Mammary epithelial cell (primary cell): ENCODE measurements at regions of chr7 and their contacts with region 1.

Region 1: DNA sequence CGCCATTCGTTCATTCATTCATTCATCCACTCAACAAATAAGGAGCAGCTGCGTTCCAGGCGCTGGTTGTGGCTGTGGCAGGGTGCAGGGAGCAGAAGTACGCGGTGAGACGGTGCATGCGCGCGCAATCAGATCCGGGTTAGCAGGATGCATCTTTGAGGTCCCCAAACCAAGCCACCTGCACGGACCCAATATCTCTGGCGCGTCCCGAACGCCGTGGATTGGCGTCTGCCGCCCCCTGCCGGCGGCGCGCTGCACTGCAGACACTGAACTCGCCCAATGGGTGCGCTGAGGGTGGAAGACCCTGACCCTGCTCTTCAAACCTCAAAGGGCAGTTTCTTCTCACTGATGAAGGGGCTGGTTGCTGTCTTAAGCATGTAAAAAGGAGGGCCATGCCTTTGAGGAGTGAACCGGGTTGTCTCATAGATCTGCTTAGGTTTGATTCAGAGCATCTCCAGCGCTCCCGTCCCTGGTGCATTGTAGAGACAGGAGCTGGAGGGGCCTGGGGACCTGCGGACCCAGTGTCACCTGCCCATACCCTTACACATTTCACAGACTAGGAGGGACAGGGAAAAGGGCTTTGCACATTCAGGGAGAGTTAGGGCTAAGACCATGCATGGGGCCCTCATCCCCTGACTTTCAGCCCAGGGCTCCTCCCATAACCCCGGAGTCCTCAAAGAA is 102.5 kb downstream of the RAMP3 start:
- DNase-seq: no peak
- H3K4me3 ChIP-seq: no peak overlapping the region
- H3K27ac ChIP-seq: no peak overlapping the region
- H3K4me1 ChIP-seq: no peaks in the 10 kb centered on the region
- H3K27me3 ChIP-seq: peaks cover 2% of the 10 kb centered on the region
- CTCF ChIP-seq: peak; percentile 96 to 99

Region 2: DNA sequence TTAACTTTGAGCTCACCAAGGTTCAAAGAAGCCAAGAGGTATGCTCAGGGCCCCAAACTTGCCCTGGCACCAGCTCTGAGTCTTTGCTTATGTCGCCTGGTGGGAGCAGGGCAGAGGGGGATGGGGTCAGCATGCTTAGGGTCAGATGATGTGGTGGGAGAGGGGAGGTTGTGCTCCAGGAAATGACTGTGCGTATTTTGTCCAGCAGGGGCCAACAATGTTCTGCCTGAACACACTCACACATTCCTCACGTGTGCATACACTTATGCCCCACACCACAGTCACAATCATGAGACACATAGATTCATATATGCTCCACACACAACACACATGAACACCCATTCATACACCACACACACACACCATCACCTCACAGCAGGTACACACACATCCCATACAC is 106.9 kb before region 1 on chr7:
- CTCF ChIA-PET with region 1: no interaction called
- dilution Hi-C with region 1: no loop called
- in situ Hi-C with region 1: loop called (anchors 5 to 10 kb)
- intact Hi-C with region 1: loop called (anchors 1 kb)
- DNase-seq: no peak
- H3K4me3 ChIP-seq: no peak overlapping the region
- H3K27ac ChIP-seq: no peak overlapping the region
- H3K4me1 ChIP-seq: no peaks in the 10 kb centered on the region
- H3K27me3 ChIP-seq: peaks cover 6% of the 10 kb centered on the region
- CTCF ChIP-seq: no peak

Region 3: GRCh38 chr7:45160417-45160881 is 99.7 kb before region 1 on chr7:
- CTCF ChIA-PET with region 1: no interaction called
- dilution Hi-C with region 1: no loop called
- in situ Hi-C with region 1: loop called in 1 of 2 experiments (anchors 10 kb)
- intact Hi-C with region 1: no loop called
- DNase-seq: no peak
- H3K4me3 ChIP-seq: no peak overlapping the region
- H3K27ac ChIP-seq: no peak overlapping the region
- H3K4me1 ChIP-seq: no peaks in the 10 kb centered on the region
- H3K27me3 ChIP-seq: peaks cover 9% of the 10 kb centered on the region
- CTCF ChIP-seq: no peak

Region 4: GRCh38 chr7:45178241-45179225 is 81.6 kb before region 1 on chr7:
- CTCF ChIA-PET with region 1: no interaction called
- dilution Hi-C with region 1: loop called (anchors 5 kb)
- in situ Hi-C with region 1: no loop called
- intact Hi-C with region 1: no loop called
- DNase-seq: no peak
- H3K4me3 ChIP-seq: no peak overlapping the region
- H3K27ac ChIP-seq: no peak overlapping the region
- H3K4me1 ChIP-seq: no peaks in the 10 kb centered on the region
- H3K27me3 ChIP-seq: no peaks in the 10 kb centered on the region
- CTCF ChIP-seq: no peak

Region 5: GRCh38 chr7:45211066-45211465 is 49.0 kb before region 1 on chr7:
- CTCF ChIA-PET with region 1: no interaction called
- dilution Hi-C with region 1: loop called (anchors 5 kb)
- in situ Hi-C with region 1: no loop called
- intact Hi-C with region 1: no loop called
- DNase-seq: no peak
- H3K4me3 ChIP-seq: no peak overlapping the region
- H3K27ac ChIP-seq: no peak overlapping the region
- H3K4me1 ChIP-seq: no peaks in the 10 kb centered on the region
- H3K27me3 ChIP-seq: peaks cover 15% of the 10 kb centered on the region
- CTCF ChIP-seq: no peak

Region 6: GRCh38 chr7:45363669-45364068 is 103.6 kb after region 1 on chr7:
- CTCF ChIA-PET with region 1: no interaction called
- dilution Hi-C with region 1: loop called (anchors 5 kb)
- in situ Hi-C with region 1: no loop called
- intact Hi-C with region 1: no loop called
- DNase-seq: no peak
- H3K4me3 ChIP-seq: no peak overlapping the region
- H3K27ac ChIP-seq: no peak overlapping the region
- H3K4me1 ChIP-seq: no peaks in the 10 kb centered on the region
- H3K27me3 ChIP-seq: peaks cover 3% of the 10 kb centered on the region
- CTCF ChIP-seq: no peak

Region 7: GRCh38 chr7:45863715-45864114 is 603.6 kb after region 1 on chr7:
- CTCF ChIA-PET with region 1: no interaction called
- dilution Hi-C with region 1: no loop called
- in situ Hi-C with region 1: no loop called
- intact Hi-C with region 1: loop called (anchors 10 kb)
- DNase-seq: no peak
- H3K4me3 ChIP-seq: no peak overlapping the region
- H3K27ac ChIP-seq: no peak overlapping the region
- H3K4me1 ChIP-seq: no peaks in the 10 kb centered on the region
- H3K27me3 ChIP-seq: no peaks in the 10 kb centered on the region
- CTCF ChIP-seq: no peak